ENCODE measurements at regions of chr2 and their contacts with region 1.

Region 1: GRCh38 chr2:63588385-63589147 is at the starts of genes MDH1 and WDPCP:
- DNase-seq: peak; percentile 92
- H3K4me3 Mint-ChIP-seq: peak within 1 kb of the TSS; percentile 99
- H3K27ac Mint-ChIP-seq: peak within 1 kb of the TSS; percentile 91
- H3K4me1 Mint-ChIP-seq: peaks cover 32% of the 10 kb centered on the region
- H3K27me3 Mint-ChIP-seq: no peaks in the 10 kb centered on the region
- total RNA-seq, gene MDH1: 212 and 226 TPM in 2 replicates
- total RNA-seq, gene WDPCP: 5.5 and 6.1 TPM in 2 replicates

Region 2: DNA sequence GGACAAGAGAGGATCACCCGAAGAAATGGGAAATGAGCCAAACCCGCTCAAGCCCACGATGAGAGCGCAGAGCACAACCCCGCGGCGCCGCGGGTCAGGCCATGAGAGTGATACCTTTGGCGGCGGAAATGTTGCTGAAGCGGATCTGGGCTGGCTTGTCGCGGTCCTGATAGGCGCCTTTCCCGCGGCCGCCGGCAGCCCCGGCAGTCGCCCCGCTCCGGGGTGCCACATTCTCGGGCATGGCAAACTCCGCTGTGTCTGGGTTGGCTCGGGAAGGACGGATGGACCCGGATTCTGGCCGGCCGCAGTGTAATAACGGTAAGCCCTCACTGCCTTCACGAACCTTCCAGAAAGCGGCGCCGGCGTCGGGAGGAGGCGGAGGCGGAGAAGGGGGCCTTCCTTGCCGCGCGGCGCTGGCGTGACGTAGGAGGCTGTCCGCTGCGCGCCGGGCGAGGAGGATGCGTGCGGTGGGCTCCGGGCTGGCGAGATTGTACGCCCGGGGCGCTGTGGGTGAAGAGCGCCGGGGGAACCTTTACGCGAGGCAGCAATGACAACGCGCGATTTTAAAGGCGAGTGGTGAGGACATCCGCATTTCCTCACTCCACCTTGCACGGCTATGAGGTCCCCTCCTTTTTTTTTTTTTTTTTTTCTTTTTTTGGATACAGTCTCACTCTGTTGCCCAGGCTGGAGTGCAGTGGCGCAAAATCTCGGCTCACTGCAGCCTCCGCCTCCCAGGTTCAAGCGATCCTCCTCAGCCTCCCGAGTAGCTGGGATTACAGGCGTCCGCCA is 1700.1 kb before region 1 on chr2 and contains the start of gene CCT4:
- intact Hi-C with region 1: loop called (anchors 1 kb)
- DNase-seq: peak; percentile 88
- H3K4me3 Mint-ChIP-seq: peak within 1 kb of the TSS; percentile 96
- H3K27ac Mint-ChIP-seq: peak within 1 kb of the TSS; percentile 99
- H3K4me1 Mint-ChIP-seq: peaks cover 20% of the 10 kb centered on the region
- H3K27me3 Mint-ChIP-seq: no peaks in the 10 kb centered on the region
- total RNA-seq, gene CCT4: 360 and 367 TPM in 2 replicates

Region 3: GRCh38 chr2:62306751-62307468 is 1281.7 kb before region 1 on chr2:
- intact Hi-C with region 1: loop called (anchors 5 kb)
- DNase-seq: peak; percentile 25
- H3K4me3 Mint-ChIP-seq: no peak overlapping the region
- H3K27ac Mint-ChIP-seq: peak overlapping the region; percentile 88
- H3K4me1 Mint-ChIP-seq: peaks cover 78% of the 10 kb centered on the region
- H3K27me3 Mint-ChIP-seq: peaks cover 2% of the 10 kb centered on the region

Region 4: DNA sequence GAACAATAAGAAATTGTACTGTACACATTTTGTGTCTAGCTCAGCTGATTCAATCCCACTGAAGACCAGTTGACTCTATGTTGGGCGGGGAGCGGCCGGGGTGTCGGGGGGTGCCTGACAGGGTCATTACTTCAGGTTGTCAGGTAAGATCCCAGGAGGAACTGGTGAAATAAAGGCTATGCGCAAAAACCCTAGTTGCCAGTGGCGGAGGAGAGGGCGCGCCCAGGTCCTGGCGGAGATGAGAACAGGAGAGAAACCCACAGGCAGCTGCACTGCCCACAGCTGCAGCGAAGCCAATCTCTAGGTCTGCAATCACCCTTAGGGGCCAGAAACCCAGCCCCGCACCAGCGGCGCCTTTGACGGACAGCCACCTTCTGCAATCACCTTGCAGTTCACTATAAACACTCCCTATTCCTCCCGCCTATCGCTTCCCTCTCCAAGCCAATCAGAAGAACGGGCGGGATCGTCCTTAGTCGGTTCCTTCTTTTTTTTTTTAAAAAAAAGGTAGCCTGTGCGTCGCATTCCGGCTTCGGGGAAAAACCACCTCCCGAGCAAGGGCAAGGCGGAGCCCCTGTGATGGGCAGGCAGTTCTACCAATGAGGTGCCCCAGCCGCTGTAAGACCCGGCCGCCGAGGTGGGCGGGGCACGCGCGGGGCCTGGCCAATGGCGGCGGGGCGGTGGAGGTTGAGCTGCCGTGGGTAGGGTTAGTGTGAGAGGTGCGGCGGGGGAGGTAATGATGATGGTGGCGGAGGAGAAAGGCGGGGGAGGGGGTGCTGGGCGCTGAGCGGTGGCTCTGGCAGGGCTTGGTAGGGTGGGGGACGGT is 883.3 kb before region 1 on chr2 and contains the start of gene EHBP1:
- intact Hi-C with region 1: loop called (anchors 1 kb)
- DNase-seq: peak; percentile 97
- H3K4me3 Mint-ChIP-seq: peak within 1 kb of the TSS; percentile 85
- H3K27ac Mint-ChIP-seq: peak within 1 kb of the TSS; percentile 70
- H3K4me1 Mint-ChIP-seq: peaks cover 31% of the 10 kb centered on the region
- H3K27me3 Mint-ChIP-seq: peaks cover 12% of the 10 kb centered on the region
- total RNA-seq, gene EHBP1: 22.1 and 25.6 TPM in 2 replicates

Region 5: GRCh38 chr2:63163161-63163820 is 425.3 kb before region 1 on chr2:
- intact Hi-C with region 1: no loop called
- DNase-seq: no peak
- H3K4me3 Mint-ChIP-seq: no peak overlapping the region
- H3K27ac Mint-ChIP-seq: no peak overlapping the region
- H3K4me1 Mint-ChIP-seq: no peaks in the 10 kb centered on the region
- H3K27me3 Mint-ChIP-seq: no peaks in the 10 kb centered on the region

Region 6: DNA sequence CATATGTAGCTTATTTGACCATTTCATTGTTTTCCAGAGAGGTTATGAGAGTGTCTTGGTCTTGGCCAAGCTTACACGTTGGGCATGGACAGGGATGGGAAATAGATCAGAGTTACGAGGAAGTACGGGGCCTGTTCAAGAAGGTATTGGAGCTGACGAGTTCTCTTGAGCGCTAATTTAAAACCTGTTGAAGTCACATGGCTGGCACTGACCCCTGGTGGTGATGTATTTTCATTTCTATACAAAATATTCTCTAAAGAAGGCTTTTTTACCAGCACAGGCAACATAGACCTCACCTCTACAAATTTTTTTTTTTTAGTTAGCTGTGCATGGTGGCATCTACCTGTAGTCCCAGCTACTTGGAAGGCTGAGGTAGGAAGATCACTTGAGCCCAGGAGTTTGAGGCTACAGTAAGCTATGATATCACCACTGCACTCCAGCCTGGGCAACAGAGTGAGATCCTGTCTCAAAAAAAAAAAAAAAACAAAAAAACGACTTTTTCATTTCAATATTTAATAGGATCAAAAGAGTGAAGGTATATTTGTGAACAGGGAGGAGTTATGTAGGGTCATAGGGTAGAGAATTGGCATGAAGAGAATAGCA is 272.8 kb after region 1 on chr2:
- intact Hi-C with region 1: loop called (anchors 2 kb)
- DNase-seq: peak; percentile 29
- H3K4me3 Mint-ChIP-seq: no peak overlapping the region
- H3K27ac Mint-ChIP-seq: no peak overlapping the region
- H3K4me1 Mint-ChIP-seq: peaks cover 54% of the 10 kb centered on the region
- H3K27me3 Mint-ChIP-seq: no peaks in the 10 kb centered on the region